Activated T-helper 1 cell treated with anti-CD3 and anti-CD28 coated beads, Interleukin-12 subunit alpha, Interleukin-12 subunit beta, Interleukin-2, Interleukin-4 antibody, amounts not matched to agents 30 ng/mL and 10 ng/mL and 1 ng/mL, durations not matched to agents 14 hours and 24 hours and 36 hours (primary cell): ENCODE measurements at regions of chr7 and their contacts with region 1.

Region 1: GRCh38 chr7:1086588-1087464 is 1.1 kb upstream of the GPER1 start:
- DNase-seq: peak; percentile 61
- H3K4me3 Mint-ChIP-seq: peak overlapping the region; percentile 63
- H3K27ac Mint-ChIP-seq: no peak overlapping the region
- H3K4me1 Mint-ChIP-seq: peaks cover 9% of the 10 kb centered on the region
- H3K27me3 Mint-ChIP-seq: peaks cover 2% of the 10 kb centered on the region

Region 2: DNA sequence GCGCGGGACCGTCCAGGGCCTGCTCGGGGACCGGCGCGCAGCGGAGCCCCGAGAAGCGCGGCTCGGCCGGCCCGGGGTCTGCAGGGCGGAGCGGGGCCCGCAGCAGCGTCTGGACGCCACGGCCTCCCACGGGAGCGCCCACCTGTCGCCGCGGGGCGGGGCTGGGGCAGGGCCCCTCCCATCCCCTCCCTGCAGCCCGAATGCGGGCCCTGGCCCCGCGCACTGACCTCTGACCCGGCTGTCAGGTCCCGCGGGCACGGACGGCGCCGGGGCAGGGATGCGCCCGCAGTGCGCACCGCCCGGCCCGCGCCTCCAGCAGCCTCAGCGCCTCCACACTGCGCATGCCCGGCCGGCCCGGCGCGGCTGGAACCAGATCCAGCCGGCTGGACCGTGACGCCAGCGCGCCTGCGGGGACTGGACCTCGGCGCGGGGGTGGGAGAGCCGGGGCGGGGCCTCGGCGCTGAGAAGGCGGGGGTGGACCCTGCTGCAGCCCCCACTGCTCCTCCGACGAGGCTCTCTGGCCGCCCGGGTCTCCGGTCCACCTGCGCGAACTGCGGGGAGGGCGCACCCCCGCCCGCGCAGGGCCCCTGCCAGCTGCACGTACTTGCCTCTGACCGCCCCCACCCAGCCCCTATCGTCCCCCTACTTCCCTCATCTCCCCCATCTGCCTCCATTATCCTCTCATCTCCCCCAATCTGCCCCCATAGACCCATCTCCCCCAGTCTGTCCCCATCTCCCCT is 58.6 kb before region 1 on chr7:
- intact Hi-C with region 1: loop called (anchors 1 kb)
- DNase-seq: peak; percentile 82
- H3K4me3 Mint-ChIP-seq: peak overlapping the region; percentile 82
- H3K27ac Mint-ChIP-seq: peak overlapping the region; percentile 91
- H3K4me1 Mint-ChIP-seq: peaks cover 17% of the 10 kb centered on the region
- H3K27me3 Mint-ChIP-seq: no peaks in the 10 kb centered on the region

Region 3: GRCh38 chr7:1103009-1103788 is 16.4 kb after region 1 on chr7:
- intact Hi-C with region 1: loop called (anchors 1 kb)
- DNase-seq: peak; percentile 4
- H3K4me3 Mint-ChIP-seq: peak overlapping the region; percentile 30
- H3K27ac Mint-ChIP-seq: peak overlapping the region; percentile 26
- H3K4me1 Mint-ChIP-seq: peaks cover 27% of the 10 kb centered on the region
- H3K27me3 Mint-ChIP-seq: no peaks in the 10 kb centered on the region

Region 4: GRCh38 chr7:1175967-1176851 is 89.4 kb after region 1 on chr7:
- intact Hi-C with region 1: loop called (anchors 2 kb)
- DNase-seq: peak; percentile 74
- H3K4me3 Mint-ChIP-seq: peak overlapping the region; percentile 19
- H3K27ac Mint-ChIP-seq: peak overlapping the region; percentile 9
- H3K4me1 Mint-ChIP-seq: peaks cover 12% of the 10 kb centered on the region
- H3K27me3 Mint-ChIP-seq: peaks cover 11% of the 10 kb centered on the region

Region 5: DNA sequence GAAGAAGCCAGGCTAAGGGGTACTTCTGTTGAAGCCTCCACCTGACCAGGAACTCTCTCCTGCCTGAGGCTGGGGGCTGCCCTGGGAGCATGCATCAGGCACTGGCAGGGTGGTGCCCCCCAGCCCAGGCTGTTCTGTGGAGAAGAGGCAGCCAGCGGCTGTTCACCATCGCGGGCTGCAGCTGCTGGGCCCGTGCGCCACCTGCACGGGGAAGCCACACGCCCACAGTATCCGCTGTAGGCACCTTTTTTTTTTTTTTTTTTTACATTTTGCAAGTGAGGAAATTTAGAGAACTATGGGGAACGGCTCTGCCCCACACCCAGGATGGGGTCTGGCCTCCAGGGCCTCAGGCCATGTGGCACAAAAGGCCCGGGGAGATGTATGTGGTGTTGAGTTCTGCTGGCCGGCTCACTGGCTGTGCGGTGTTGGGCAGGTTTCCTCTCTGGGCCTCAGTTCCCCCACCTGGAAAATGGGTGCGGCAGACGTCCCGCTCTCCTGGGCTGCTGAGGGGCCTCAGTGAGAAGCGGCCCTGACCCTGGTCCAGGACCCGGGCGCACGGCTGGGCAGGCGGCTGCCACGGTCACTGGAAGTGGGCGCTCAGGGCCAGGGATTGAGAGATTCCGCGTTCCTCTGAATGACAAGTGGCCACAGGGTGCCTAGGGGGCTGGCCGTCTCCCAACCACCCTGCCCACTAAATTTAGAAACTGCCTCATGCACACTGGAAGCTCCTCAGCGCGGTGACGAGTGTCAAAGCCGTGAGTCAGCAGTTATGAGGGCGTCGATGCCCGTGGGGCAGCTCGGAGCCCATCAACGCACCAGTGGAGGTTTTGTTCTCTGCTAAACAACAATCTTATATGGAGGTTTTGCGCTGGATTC is 426.2 kb after region 1 on chr7:
- intact Hi-C with region 1: no loop called
- DNase-seq: peak; percentile 20
- H3K4me3 Mint-ChIP-seq: no peak overlapping the region
- H3K27ac Mint-ChIP-seq: no peak overlapping the region
- H3K4me1 Mint-ChIP-seq: peaks cover 13% of the 10 kb centered on the region
- H3K27me3 Mint-ChIP-seq: no peaks in the 10 kb centered on the region